IMR-90 (cell line): ENCODE measurements at regions of chr1 and their contacts with region 1.

Region 1: DNA sequence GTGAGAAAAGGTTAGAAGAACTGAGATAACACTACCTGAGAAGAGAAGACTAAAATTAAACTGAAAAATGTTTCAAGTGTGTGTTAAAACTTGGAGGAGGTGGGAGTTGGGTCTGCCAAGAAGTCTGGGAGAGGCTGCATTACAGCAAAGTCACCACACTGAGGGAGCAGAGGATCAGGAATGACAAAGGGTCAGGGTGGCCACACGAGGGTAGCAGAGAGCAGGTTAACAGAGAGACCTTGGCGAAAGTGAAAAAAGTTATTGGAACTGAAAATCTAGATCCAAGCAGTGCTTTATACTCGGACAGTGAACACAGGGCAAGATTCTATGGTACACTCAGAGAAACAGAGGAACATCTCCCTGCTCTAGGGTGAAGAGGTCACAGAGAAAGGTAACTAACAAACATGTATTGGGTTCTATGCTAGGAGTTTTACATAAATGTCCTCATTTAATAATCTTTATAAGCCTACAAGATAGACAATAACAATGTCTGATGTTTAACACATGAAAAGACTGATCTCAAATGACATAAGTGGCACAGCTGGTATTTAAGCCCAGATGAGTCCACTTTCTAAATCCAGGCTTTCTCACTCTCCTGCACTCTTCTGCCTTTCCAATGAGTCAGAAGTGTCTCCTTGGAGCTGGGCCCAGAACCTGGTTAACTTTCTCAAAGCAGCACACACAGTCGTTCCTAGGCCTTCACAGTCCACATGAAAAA is 10.3 kb upstream of the CADM3 start:
- DNase-seq: peak; percentile 86
- ATAC-seq: peak; percentile 100
- H3K4me3 ChIP-seq: no peak overlapping the region
- H3K27ac ChIP-seq: no peak overlapping the region
- H3K4me1 ChIP-seq: peaks cover 2% of the 10 kb centered on the region; the same call in 1 of the 2 replicates
- H3K27me3 ChIP-seq: no peaks in the 10 kb centered on the region
- CTCF ChIP-seq: peak; percentile 100
- POLR2A ChIP-seq: no peak
- RAD21 ChIP-seq: peak; percentile 95

Region 2: GRCh38 chr1:159197561-159198557 is 36.7 kb after region 1 on chr1:
- CTCF ChIA-PET with region 1: interaction called, 7 read pairs
- POLR2A ChIA-PET with region 1: no interaction called
- dilution Hi-C with region 1: no loop called
- in situ Hi-C with region 1: loop called (anchors 5 kb)
- intact Hi-C with region 1: loop called (anchors 1 kb)
- DNase-seq: peak; percentile 72
- ATAC-seq: peak; percentile 100
- H3K4me3 ChIP-seq: no peak overlapping the region
- H3K27ac ChIP-seq: no peak overlapping the region
- H3K4me1 ChIP-seq: no peaks in the 10 kb centered on the region
- H3K27me3 ChIP-seq: no peaks in the 10 kb centered on the region; the same call in 1 of the 2 replicates
- CTCF ChIP-seq: peak; percentile 93
- POLR2A ChIP-seq: no peak
- RAD21 ChIP-seq: peak; percentile 68